PC-3 (cell line): ENCODE measurements at regions of chr1 and their contacts with region 1.

Region 1: DNA sequence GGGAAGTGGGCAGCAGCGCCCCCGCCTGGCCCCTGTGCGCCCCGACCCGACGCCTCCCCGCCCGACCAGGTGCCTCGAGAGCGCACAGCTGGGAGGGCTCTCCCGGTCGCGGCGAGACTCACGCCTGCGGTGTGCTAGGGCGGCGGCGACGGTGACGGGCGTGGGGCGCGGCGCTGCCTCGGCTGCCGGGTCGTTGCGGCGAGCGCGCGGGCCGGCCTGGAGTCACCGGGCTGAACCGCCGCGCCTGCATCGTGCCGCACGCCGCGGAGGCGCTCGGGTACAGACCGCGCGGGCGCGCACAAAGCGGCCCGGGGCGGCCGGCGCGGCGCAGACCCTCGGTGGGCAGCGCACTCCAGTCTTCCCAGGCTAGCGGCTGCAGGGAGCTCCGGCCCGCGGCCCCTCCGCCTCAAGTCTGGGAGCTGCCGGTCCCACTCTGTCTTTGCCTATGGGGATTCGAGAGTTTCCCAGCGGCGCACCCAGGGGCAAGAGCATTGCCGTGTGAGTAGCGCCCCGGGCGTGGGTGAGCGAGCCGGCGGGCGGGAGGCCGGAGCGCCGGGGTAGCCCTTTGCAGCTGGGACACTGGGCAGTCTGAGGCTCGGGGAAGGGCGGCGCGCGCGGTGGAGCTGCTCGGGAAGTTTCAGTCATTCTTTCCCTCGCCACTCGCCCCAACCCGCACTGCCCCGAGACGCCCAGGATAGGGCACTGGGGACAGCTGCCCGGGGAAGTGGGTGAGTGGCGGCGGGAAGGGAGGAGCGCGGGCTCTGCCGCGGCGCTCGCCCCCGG is at the start of gene SLC35F3:
- DNase-seq: peak; percentile 93
- ATAC-seq: peak; percentile 78
- H3K4me3 ChIP-seq: peak within 1 kb of the TSS; percentile 72
- H3K27ac ChIP-seq: peak within 1 kb of the TSS; percentile 85
- H3K4me1 ChIP-seq: peaks cover 39% of the 10 kb centered on the region
- H3K27me3 ChIP-seq: no peaks in the 10 kb centered on the region
- CTCF ChIP-seq: peak; percentile 72
- total RNA-seq, gene SLC35F3: 17.7 and 19.3 TPM in 2 replicates

Region 2: DNA sequence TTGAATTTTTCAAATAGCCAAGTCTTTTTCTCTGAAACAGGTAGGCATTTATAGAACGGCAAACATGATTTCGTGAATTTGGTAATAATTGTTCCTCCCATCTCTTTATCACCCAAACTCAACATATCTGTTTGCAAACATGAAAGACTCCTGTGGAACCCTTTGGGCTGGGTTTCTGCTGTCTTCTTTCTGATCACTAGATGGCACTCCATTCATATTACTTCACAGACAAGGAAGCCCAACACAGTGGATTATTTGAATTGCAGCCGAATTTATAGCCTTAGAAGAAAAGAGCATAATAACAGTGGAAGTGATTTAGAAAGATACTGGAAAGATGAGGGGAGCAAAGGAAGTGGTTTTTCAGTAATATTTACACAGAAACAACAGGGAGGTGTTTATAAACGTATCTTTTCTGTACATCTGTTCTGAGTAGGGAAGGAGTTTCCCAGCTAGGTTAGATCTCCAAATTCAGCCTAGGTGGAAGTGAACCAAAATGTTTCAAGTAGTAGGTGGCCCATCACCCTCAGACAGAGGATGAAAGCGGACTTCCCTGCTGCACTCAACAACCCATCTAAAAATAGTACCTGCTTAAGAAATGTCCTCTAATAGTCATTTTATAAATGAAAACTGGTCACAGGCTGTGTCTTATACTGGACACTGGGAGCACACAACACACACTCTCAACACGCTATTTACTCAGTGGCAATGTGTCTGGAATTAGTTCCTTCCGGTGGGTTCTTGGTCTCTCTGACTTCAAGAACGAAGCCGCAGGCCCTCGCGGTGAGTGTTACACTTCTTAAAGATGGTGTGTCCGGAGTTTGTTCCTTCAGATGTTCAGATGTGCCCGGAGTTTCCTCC is 509.7 kb before region 1 on chr1:
- CTCF ChIA-PET with region 1: interaction called, 3 read pairs
- POLR2A ChIA-PET with region 1: no interaction called
- intact Hi-C with region 1: loop called (anchors 5 kb)
- DNase-seq: peak; percentile 90
- ATAC-seq: peak; percentile 97
- H3K4me3 ChIP-seq: no peak overlapping the region
- H3K27ac ChIP-seq: no peak overlapping the region
- H3K4me1 ChIP-seq: 0 out of 2 replicates have a peak, but pooled peaks cover 3% of the 10 kb centered on the region
- H3K27me3 ChIP-seq: no peaks in the 10 kb centered on the region
- CTCF ChIP-seq: peak; percentile 98

Region 3: DNA sequence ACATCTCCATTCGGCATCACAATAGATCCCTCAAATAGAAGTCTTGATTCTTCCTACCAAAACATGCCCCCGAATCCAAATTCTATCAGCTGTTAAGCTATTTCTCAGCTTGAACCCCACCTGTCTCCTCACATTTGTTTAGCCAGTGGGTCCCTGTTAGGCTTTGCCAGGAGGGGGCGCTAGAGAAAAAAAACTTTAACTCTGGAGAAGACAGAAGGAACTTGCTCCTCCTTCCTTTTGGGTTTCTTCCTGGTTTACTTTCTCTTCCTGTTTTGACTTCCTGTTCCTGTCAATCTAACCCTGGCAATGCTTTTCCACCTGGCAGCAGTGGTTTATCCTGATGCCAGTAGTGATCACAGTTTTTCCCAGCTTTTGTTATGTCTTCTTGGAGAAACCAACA is 386.5 kb before region 1 on chr1:
- CTCF ChIA-PET with region 1: interaction called, 5 read pairs
- POLR2A ChIA-PET with region 1: no interaction called
- intact Hi-C with region 1: loop called (anchors 10 kb)
- DNase-seq: peak; percentile 85
- ATAC-seq: no peak
- H3K4me3 ChIP-seq: no peak overlapping the region
- H3K27ac ChIP-seq: no peak overlapping the region
- H3K4me1 ChIP-seq: peaks cover 17% of the 10 kb centered on the region
- H3K27me3 ChIP-seq: no peaks in the 10 kb centered on the region
- CTCF ChIP-seq: peak; percentile 98

Region 4: GRCh38 chr1:233587958-233588799 is 316.6 kb before region 1 on chr1:
- CTCF ChIA-PET with region 1: no interaction called
- POLR2A ChIA-PET with region 1: no interaction called
- intact Hi-C with region 1: no loop called
- DNase-seq: no peak
- ATAC-seq: no peak
- H3K4me3 ChIP-seq: no peak overlapping the region
- H3K27ac ChIP-seq: no peak overlapping the region
- H3K4me1 ChIP-seq: no peaks in the 10 kb centered on the region
- H3K27me3 ChIP-seq: no peaks in the 10 kb centered on the region
- CTCF ChIP-seq: no peak

Region 5: GRCh38 chr1:233945573-233945972 is 40.7 kb after region 1 on chr1:
- CTCF ChIA-PET with region 1: no interaction called
- POLR2A ChIA-PET with region 1: no interaction called
- intact Hi-C with region 1: no loop called
- DNase-seq: peak; percentile 75
- ATAC-seq: peak; percentile 80
- H3K4me3 ChIP-seq: no peak overlapping the region
- H3K27ac ChIP-seq: peak overlapping the region; percentile 28
- H3K4me1 ChIP-seq: peaks cover 9% of the 10 kb centered on the region; the same call in 1 of the 2 replicates
- H3K27me3 ChIP-seq: no peaks in the 10 kb centered on the region
- CTCF ChIP-seq: no peak

Region 6: DNA sequence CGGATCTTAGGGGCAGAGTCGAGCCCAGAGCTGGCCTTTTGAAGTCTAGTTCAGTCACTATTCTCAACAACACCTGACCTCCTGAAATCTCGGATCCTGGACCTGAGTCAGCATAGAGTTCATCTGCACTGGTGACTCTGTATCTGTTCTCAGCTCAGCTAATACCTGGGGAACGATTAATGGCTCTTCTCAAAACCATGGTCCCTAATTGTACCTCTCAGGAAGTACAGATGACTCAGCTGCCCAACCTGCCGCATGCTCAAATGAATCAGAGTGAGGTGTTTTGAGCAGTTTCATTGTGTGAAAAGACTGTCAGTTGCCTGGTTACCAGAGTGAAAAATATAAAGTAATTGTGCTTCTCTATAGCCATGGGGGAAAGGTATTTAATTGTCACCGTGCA is 88.8 kb after region 1 on chr1:
- CTCF ChIA-PET with region 1: no interaction called
- POLR2A ChIA-PET with region 1: no interaction called
- intact Hi-C with region 1: loop called (anchors 2 kb)
- DNase-seq: peak; percentile 99
- ATAC-seq: peak; percentile 85
- H3K4me3 ChIP-seq: no peak overlapping the region
- H3K27ac ChIP-seq: peak overlapping the region; percentile 97
- H3K4me1 ChIP-seq: peaks cover 62% of the 10 kb centered on the region
- H3K27me3 ChIP-seq: no peaks in the 10 kb centered on the region
- CTCF ChIP-seq: no peak

Region 7: DNA sequence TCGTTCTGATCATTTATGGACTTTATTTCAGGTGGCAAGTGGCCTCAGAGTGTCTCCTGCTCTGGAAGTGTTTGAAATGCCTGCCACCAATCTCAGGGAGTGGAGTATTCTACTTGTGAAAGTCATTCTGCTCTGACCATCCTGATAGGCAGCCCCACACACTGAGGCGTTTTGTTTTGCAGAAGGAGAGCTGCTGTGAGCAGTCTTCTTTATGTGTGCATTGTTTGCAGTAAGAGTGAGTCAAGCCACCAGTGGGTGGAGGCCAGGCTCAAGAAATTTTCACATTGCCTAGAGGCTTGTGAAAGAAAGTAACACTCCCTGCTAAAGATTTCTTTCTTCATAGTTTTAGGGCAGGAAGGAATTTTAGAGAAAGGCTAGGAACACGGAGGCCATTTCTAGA is 204.1 kb after region 1 on chr1:
- CTCF ChIA-PET with region 1: interaction called, 3 read pairs
- POLR2A ChIA-PET with region 1: interaction called, 6 read pairs
- intact Hi-C with region 1: loop called (anchors 2 kb)
- DNase-seq: peak; percentile 93
- ATAC-seq: peak; percentile 93
- H3K4me3 ChIP-seq: no peak overlapping the region
- H3K27ac ChIP-seq: peak overlapping the region; percentile 86
- H3K4me1 ChIP-seq: peaks cover 26% of the 10 kb centered on the region
- H3K27me3 ChIP-seq: no peaks in the 10 kb centered on the region
- CTCF ChIP-seq: no peak

Region 8: GRCh38 chr1:234170622-234171021 is 265.8 kb after region 1 on chr1:
- CTCF ChIA-PET with region 1: no interaction called
- POLR2A ChIA-PET with region 1: no interaction called
- intact Hi-C with region 1: no loop called
- DNase-seq: no peak
- ATAC-seq: no peak
- H3K4me3 ChIP-seq: no peak overlapping the region
- H3K27ac ChIP-seq: no peak overlapping the region
- H3K4me1 ChIP-seq: no peaks in the 10 kb centered on the region
- H3K27me3 ChIP-seq: no peaks in the 10 kb centered on the region
- CTCF ChIP-seq: no peak